Activated CD8-positive, alpha-beta T cell treated with anti-CD3 and anti-CD28 coated beads, Interleukin-2, amount 10 ng/mL, durations not matched to agents 7 days and 5 days (primary cell): ENCODE measurements at regions of chr17 and their contacts with region 1.

Region 1: DNA sequence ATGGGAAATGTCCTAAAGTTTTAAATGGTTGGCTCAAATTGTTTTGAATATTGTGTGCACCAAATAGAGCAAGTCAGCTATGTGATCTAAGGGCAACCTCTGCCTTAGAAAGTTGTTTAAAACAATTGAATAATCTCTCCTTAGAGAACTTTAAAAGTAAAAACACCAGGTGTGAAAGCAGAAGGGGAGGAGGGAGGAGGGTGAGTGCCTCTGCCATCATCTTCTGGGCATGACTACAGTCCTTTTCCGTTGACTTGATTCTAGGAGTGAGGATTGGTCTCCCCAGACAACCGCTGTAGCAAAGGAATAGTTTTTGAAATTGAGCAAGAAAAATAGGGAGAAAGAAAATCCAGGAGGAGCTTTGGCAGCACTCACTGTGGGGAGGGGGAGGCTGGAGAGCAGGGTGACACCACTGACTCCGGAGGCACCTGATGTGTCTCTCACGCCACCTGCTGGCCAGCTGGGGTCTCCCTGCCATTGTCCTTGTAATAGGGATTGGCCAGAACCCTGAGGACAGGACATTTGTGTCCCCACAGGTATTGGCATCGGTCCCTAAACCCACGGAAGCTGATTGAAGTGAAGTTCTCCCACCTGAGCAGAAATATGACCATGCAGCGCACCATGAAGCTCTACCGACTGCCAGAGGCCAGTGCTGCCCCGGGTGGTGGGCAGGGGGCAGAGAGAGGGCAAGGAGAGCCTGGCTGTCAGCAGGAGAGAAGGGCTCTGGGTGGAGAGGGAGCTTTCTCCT is 33.3 kb downstream of the PLCD3 start:
- DNase-seq: peak; percentile 82
- ATAC-seq: peak; percentile 93
- H3K4me3 Mint-ChIP-seq: no peak overlapping the region
- H3K27ac Mint-ChIP-seq: no peak overlapping the region
- H3K4me1 Mint-ChIP-seq: no peaks in the 10 kb centered on the region
- H3K27me3 Mint-ChIP-seq: no peaks in the 10 kb centered on the region

Region 2: GRCh38 chr17:44919885-44920564 is 179.0 kb before region 1 on chr17:
- CTCF ChIA-PET with region 1: interaction called, 13 read pairs
- POLR2A ChIA-PET with region 1: no interaction called
- DNase-seq: peak; percentile 76
- ATAC-seq: peak; percentile 84
- H3K4me3 Mint-ChIP-seq: no peak overlapping the region
- H3K27ac Mint-ChIP-seq: no peak overlapping the region
- H3K4me1 Mint-ChIP-seq: peaks cover 6% of the 10 kb centered on the region
- H3K27me3 Mint-ChIP-seq: peaks cover 11% of the 10 kb centered on the region

Region 3: DNA sequence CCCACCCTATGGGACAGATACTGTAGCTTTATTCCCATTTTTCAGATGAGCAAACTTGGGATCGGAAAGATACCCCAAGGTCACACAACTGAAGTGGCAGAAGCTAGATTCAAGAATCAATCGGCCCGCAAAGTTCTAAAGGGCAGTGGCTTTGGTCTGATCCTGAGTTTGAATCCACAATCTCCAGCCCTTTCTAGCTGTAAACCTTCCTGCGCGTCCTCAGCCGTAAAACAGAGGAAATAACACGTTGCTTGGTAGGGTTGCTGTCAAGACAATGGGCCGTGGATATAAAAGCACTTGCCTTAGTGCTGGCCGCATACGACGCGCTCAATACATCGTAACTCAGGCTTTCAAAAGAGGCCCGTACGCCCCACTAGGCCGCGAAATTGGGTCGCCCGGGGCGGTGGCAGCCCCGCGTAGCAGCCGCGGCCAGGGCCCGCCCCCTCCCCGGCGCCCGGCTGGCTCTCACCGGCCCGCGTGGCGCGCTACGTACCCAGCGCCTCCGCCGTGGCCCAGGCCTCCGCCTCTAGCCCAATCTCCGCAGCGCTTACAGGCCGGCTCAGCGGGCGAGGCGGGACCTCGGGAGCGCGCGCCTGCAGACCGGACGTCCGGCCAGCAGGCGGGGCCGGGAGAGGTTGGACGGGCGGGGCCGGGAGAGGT is 47.9 kb before region 1 on chr17 and contains the start of gene DCAKD:
- CTCF ChIA-PET with region 1: interaction called, 18 read pairs
- POLR2A ChIA-PET with region 1: no interaction called
- DNase-seq: peak; percentile 94
- ATAC-seq: peak; percentile 98
- H3K4me3 Mint-ChIP-seq: peak within 1 kb of the TSS; percentile 97
- H3K27ac Mint-ChIP-seq: peak within 1 kb of the TSS; percentile 97
- H3K4me1 Mint-ChIP-seq: peaks cover 48% of the 10 kb centered on the region
- H3K27me3 Mint-ChIP-seq: no peaks in the 10 kb centered on the region
- total RNA-seq, gene DCAKD: 32.9 to 33.7 TPM

Region 4: GRCh38 chr17:45060797-45061605 is 38.0 kb before region 1 on chr17 and contains the start of gene NMT1:
- CTCF ChIA-PET with region 1: interaction called, 12 read pairs
- POLR2A ChIA-PET with region 1: interaction called, 3 read pairs
- DNase-seq: peak; percentile 99
- ATAC-seq: peak; percentile 93
- H3K4me3 Mint-ChIP-seq: peak within 1 kb of the TSS; percentile 90
- H3K27ac Mint-ChIP-seq: peak within 1 kb of the TSS; percentile 96
- H3K4me1 Mint-ChIP-seq: peaks cover 35% of the 10 kb centered on the region
- H3K27me3 Mint-ChIP-seq: no peaks in the 10 kb centered on the region
- total RNA-seq, gene NMT1: 125 to 143 TPM

Region 5: DNA sequence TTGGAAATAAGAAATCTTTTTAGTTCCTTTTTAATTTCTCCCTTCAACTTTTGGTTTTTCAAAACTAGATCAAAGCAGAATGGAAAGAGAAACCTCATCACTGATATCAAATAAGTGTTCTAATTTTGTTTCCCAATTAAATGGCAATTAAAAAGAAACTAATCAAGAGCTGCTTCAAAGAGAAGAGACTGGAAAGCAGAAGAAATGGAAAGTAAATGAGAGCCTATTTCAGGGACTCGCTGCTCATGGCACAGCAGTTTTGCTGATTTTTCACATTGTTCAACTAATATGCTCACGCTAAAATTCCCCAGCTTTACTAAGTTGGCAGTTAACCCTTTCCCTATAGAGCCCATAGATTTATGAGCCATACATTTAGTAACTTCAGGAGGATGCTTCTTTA is 31.4 kb before region 1 on chr17:
- CTCF ChIA-PET with region 1: interaction called, 12 read pairs
- POLR2A ChIA-PET with region 1: no interaction called
- DNase-seq: no peak
- ATAC-seq: no peak
- H3K4me3 Mint-ChIP-seq: no peak overlapping the region
- H3K27ac Mint-ChIP-seq: no peak overlapping the region
- H3K4me1 Mint-ChIP-seq: peaks cover 23% of the 10 kb centered on the region
- H3K27me3 Mint-ChIP-seq: no peaks in the 10 kb centered on the region

Region 6: GRCh38 chr17:45087504-45087975 is 11.5 kb before region 1 on chr17:
- CTCF ChIA-PET with region 1: interaction called, 22 read pairs
- POLR2A ChIA-PET with region 1: no interaction called
- DNase-seq: no peak
- ATAC-seq: no peak
- H3K4me3 Mint-ChIP-seq: no peak overlapping the region
- H3K27ac Mint-ChIP-seq: peak overlapping the region; percentile 75
- H3K4me1 Mint-ChIP-seq: peaks cover 15% of the 10 kb centered on the region
- H3K27me3 Mint-ChIP-seq: no peaks in the 10 kb centered on the region

Region 7: GRCh38 chr17:45120558-45120957 is 21.5 kb after region 1 on chr17:
- CTCF ChIA-PET with region 1: interaction called, 18 read pairs
- POLR2A ChIA-PET with region 1: no interaction called
- DNase-seq: no peak
- ATAC-seq: no peak
- H3K4me3 Mint-ChIP-seq: no peak overlapping the region
- H3K27ac Mint-ChIP-seq: no peak overlapping the region
- H3K4me1 Mint-ChIP-seq: no peaks in the 10 kb centered on the region
- H3K27me3 Mint-ChIP-seq: peaks cover 12% of the 10 kb centered on the region

Region 8: DNA sequence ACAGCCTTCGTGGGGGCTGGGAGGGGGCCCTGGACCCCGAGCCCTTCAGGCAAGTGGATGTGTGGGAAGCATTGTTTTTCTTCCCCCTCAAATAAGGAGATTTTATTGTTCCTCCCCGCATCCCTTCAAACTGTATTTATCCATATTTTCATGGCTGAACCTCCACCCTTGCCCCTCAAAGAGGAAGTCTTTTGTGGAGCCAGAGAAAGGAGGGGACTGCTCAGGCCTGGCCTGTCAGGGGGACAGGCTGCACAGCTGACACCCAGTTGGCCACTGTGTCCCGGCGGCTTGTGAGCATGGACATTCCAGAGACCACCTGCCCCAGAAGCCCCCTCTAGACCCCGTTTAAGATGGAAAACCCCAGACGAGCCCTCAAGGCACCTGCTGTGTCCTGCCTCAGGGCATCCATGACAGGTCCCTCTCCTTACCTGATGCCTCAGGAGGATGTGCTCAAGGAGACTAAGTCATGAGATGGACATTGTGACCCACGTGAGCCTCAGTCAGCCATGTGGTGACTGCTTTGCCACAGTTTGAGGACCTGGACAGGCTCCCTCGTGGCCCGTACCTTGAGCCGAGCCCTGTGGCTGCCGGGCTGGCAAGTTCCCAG is 78.6 kb after region 1 on chr17:
- CTCF ChIA-PET with region 1: no interaction called
- POLR2A ChIA-PET with region 1: no interaction called
- DNase-seq: no peak
- ATAC-seq: no peak
- H3K4me3 Mint-ChIP-seq: no peak overlapping the region
- H3K27ac Mint-ChIP-seq: no peak overlapping the region
- H3K4me1 Mint-ChIP-seq: peaks cover 5% of the 10 kb centered on the region
- H3K27me3 Mint-ChIP-seq: no peaks in the 10 kb centered on the region